Posterior cingulate gyrus (tissue), 11 donors: ENCODE measurements at regions of chr9 and their contacts with region 1.

Region 1: GRCh38 chr9:26856413-26857032 is 36.1 kb downstream of the CAAP1 start:
- DNase-seq: no peak

Region 2: DNA sequence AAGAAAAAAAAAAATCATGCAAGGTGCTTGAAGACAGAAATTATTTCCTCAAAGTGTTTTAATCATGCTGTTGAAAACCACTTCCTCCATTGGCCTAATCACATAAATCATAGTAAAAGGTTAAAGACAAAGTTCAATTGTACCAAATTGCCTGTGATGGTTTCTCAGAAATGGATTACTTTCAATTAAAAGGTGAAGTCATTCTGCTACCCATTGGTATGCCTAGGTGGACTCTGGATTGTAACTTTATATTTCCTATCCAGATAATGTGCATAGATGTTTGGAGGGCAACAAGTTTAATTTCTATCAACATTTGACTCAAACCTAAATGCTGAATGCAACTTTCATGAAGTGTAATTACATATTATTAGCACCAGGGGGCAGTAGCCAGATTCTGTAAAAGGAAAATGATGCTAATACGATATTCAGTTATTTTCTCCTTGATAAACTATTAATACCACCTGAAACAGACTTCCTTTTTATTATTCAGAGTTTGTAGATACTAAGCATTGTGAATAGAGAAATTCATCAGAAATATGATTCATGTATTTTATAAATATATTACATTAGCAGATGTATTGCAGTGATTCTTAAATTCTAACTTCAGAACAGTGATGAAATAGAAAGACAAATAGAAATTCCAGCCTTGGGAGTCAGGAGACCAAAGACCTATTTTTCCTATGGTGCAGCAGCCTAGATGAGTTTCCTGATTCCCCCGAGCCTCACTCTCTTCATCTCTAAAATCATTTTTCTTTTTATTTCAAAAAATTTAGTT is 112.1 kb before region 1 on chr9:
- intact Hi-C with region 1: loop called (anchors 10 kb)
- DNase-seq: no peak